Sciatic nerve (tissue), 2 donors: ENCODE measurements at regions of chr2 and their contacts with region 1.

Region 1: DNA sequence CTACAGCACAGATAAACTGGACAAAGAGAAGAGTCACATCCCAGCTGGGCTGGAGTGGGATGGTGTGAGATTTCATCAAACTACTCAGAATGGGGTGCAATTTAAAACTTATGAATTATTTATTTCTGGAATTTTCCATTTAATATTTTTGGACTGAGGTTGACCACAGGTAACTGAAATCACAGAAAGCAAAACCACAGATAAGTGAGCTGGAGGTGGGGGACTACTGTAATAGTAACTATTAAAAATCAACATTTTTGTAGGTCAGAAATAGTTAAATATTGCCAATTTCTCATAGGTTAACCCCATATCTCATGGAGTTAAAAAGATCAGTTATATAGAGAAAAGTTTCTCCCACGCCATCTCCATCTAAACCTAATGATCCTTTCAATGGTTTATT is 88.1 kb downstream of the SPOPL start:
- DNase-seq: no peak
- ATAC-seq: no peak

Region 2: GRCh38 chr2:138364554-138365162 is 225.0 kb before region 1 on chr2:
- intact Hi-C with region 1: loop called (anchors 5 kb)
- DNase-seq: no peak
- ATAC-seq: peak; percentile 84